ENCODE measurements at regions of chr17 and their contacts with region 1.

Region 1: DNA sequence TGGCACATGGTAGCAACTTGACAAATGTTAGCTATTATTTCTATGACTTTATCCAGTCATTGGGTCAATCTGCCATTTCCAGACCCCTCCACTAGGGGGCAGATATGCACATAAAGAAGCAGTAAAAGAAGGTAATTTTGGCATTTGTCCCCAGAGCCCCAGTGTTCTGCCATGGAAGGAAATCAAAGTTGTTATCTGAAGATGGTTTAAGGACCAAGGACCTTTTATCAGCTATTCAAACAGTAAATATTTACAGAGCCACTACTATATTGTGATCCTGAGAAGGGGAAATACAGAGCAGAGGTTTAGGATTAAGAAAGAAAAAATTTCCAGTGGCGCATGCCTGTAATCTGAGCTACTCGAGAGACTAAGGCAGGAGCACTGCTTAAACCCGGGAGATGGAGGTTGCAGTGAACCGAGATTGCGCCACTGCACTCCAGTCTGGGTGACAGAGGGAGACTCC is 20.0 kb downstream of the TRAF4 start:
- DNase-seq: peak; percentile 71
- CTCF ChIP-seq: peak; percentile 77

Region 2: GRCh38 chr17:28384281-28385036 is 379.4 kb before region 1 on chr17:
- CTCF ChIA-PET with region 1: no interaction called
- POLR2A ChIA-PET with region 1: no interaction called
- DNase-seq: peak; percentile 80
- CTCF ChIP-seq: no peak

Region 3: GRCh38 chr17:28716740-28717577 is 46.9 kb before region 1 on chr17:
- CTCF ChIA-PET with region 1: interaction called, 16 read pairs
- POLR2A ChIA-PET with region 1: no interaction called
- DNase-seq: no peak
- CTCF ChIP-seq: no peak

Region 4: DNA sequence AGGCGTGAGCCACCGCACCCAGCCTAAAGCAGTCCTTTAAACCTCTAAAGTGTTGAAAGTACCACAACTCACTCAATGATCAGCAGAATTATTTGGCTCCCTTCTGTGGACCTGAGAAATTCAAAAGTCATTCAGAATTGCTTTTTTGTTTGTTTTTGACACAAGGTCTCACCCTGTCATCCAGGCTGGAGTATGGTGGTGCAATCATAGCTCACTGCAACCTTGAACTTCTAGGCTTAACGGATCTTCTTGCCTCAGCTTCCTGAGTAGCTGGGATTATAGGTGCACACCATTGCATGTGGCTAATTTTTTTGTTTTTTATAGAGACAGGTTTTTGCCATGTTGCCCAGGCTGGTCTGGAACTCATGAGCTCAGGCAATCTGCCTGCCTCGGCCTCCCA is 24.3 kb after region 1 on chr17:
- CTCF ChIA-PET with region 1: interaction called, 12 read pairs
- POLR2A ChIA-PET with region 1: interaction called, 5 read pairs
- DNase-seq: no peak
- CTCF ChIP-seq: no peak

Region 5: DNA sequence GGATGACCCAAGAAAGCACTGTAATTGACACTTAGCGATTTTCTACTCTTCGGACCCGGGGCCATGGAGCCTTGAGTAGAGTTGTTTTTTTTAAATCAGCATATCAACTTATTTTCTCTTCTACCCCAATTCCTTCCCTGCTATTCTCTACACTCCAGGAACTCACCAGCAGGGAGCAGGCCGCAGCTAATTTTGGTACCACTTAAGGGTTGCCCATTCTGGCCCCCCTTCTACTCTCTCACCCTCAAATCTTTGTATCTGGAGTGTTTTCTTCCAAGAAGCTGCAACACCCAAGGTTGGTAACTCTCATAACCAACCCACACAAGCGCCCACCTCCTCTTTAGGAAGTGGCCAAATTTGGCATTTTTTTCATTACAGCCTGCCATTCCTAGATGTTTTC is 85.4 kb after region 1 on chr17:
- CTCF ChIA-PET with region 1: interaction called, 14 read pairs
- POLR2A ChIA-PET with region 1: no interaction called
- DNase-seq: peak; percentile 15
- CTCF ChIP-seq: peak; percentile 6

Region 6: DNA sequence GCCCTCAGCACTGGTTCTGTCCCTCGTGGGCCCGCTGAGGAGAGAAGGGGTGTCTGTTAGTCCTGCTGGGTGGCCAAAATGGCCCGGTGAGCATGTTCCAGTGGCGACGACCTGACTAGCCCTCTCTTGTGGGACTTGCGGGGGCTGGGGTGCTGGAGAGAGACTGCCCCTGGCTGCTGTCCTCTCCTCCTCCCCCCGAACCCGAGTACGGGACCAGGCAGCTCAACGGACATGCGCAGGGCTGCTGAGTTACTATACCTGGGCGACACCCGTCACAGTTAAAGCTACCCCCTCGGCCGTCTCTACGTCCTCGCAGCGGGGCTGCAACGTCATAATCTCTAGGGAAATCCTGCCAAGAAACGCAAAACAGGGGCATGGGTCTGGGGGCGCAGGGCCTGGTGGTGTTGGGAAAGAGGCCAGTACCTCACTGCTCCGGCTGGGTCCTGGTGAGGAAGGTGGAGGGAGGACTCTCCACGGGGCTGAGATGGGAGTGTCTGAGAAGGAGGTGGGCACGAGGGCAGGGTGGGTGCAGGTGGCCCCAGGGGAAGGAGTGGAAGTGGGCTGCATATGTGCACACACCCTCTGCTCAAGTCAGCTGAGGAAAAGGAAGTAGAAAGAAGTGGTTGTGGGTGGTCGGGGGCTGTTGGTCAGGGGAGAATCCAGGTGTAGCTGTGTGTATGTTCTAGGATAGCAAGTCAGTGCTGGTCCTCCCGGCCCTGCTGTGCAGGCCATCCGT is 120.3 kb after region 1 on chr17:
- CTCF ChIA-PET with region 1: interaction called, 13 read pairs
- POLR2A ChIA-PET with region 1: interaction called, 10 read pairs
- DNase-seq: no peak
- CTCF ChIP-seq: no peak

Region 7: GRCh38 chr17:28916302-28916934 is 152.6 kb after region 1 on chr17:
- CTCF ChIA-PET with region 1: interaction called, 89 read pairs
- POLR2A ChIA-PET with region 1: no interaction called
- DNase-seq: no peak
- CTCF ChIP-seq: peak; percentile 68

Region 8: GRCh38 chr17:28967221-28968140 is 203.6 kb after region 1 on chr17:
- CTCF ChIA-PET with region 1: interaction called, 11 read pairs
- POLR2A ChIA-PET with region 1: no interaction called
- DNase-seq: no peak
- CTCF ChIP-seq: no peak